Lower leg skin (tissue), 4 donors: ENCODE measurements at regions of chr9 and their contacts with region 1.

Region 1: GRCh38 chr9:2857564-2858198 is 13.8 kb upstream of the PUM3 start:
- DNase-seq: peak in 1 of 2 donors; percentile 73
- H3K4me3 ChIP-seq: no peak overlapping the region
- CTCF ChIP-seq: no peak
- POLR2A ChIP-seq: no peak

Region 2: GRCh38 chr9:3181049-3181953 is 323.6 kb after region 1 on chr9:
- intact Hi-C with region 1: loop called (anchors 5 kb)
- DNase-seq: no peak
- H3K4me3 ChIP-seq: no peak overlapping the region
- CTCF ChIP-seq: no peak
- POLR2A ChIP-seq: no peak